OCI-LY7 (cell line): ENCODE measurements at regions of chr10 and their contacts with region 1.

Region 1: GRCh38 chr10:128843972-128844371 is 623.1 kb upstream of the MGMT start:
- DNase-seq: no peak
- H3K4me3 ChIP-seq: no peak overlapping the region
- H3K27ac ChIP-seq: no peak overlapping the region
- H3K4me1 ChIP-seq: no peaks in the 10 kb centered on the region
- CTCF ChIP-seq: peak; percentile 61; the same call in 1 of the 2 replicates

Region 2: DNA sequence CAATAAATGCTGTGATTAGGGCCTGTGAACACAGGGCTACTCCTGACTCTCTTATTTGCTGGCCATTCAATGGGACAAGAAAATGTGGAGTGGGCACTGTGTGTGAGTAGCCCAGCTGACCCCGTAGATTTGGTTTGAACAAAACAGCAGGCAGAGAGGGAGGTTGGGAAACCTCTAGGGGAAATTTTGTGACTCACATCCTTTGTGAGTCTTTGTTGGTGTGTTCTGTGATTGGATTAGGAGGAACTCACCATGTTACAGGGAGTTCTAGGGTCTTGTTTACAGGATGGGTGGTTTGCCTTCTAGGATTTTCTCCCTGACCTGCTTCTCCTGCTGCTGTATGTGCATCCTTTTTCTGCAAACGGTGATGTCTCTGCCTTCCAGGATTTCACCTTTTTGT is 589.5 kb before region 1 on chr10:
- CTCF ChIA-PET with region 1: no interaction called
- POLR2A ChIA-PET with region 1: no interaction called
- intact Hi-C with region 1: loop called (anchors 5 kb)
- DNase-seq: no peak
- H3K4me3 ChIP-seq: no peak overlapping the region
- H3K27ac ChIP-seq: no peak overlapping the region
- H3K4me1 ChIP-seq: no peaks in the 10 kb centered on the region
- CTCF ChIP-seq: no peak

Region 3: DNA sequence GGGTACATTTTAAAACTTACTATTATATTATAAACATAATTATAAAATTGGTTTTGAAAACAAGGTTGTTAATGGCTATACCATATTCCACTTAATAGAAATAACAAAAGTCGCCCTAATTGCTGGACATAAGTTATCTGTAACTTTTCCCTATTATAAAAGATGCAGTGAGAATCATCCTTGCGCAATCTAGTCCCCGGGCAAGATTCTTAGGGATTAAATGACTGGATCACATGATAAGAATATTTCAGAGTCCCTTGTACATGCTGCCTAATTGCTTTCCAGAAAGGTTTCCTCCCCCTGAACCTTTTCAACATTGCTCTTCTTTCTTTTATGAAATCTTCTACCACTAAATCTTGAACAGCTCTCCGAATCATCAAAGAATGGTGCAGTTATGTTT is 237.9 kb before region 1 on chr10:
- CTCF ChIA-PET with region 1: no interaction called
- POLR2A ChIA-PET with region 1: no interaction called
- intact Hi-C with region 1: no loop called
- DNase-seq: no peak
- H3K4me3 ChIP-seq: no peak overlapping the region
- H3K27ac ChIP-seq: no peak overlapping the region
- H3K4me1 ChIP-seq: no peaks in the 10 kb centered on the region
- CTCF ChIP-seq: no peak

Region 4: DNA sequence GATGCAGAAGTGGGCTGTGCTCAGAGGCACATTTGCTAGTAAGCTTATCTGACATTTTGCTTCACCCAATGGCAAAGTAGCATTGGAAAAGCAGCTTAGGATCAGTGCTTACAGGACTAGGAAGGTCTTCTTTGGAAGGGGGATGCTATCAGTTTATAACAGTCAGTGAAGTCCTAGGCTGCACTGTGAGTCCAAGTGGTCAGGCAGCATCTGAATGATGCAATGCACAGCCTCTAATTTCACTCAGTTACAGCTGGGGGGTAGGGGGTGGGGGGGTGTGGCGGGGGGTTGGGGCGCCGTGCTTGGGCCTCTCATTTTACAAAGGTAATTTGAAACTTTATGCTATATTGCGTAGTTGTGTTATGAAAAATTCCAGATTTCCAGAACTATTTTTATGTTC is 29.2 kb before region 1 on chr10:
- CTCF ChIA-PET with region 1: no interaction called
- POLR2A ChIA-PET with region 1: no interaction called
- intact Hi-C with region 1: no loop called
- DNase-seq: no peak
- H3K4me3 ChIP-seq: no peak overlapping the region
- H3K27ac ChIP-seq: no peak overlapping the region
- H3K4me1 ChIP-seq: no peaks in the 10 kb centered on the region
- CTCF ChIP-seq: no peak